Natural killer cell (primary cell): ENCODE measurements at regions of chr2 and their contacts with region 1.

Region 1: DNA sequence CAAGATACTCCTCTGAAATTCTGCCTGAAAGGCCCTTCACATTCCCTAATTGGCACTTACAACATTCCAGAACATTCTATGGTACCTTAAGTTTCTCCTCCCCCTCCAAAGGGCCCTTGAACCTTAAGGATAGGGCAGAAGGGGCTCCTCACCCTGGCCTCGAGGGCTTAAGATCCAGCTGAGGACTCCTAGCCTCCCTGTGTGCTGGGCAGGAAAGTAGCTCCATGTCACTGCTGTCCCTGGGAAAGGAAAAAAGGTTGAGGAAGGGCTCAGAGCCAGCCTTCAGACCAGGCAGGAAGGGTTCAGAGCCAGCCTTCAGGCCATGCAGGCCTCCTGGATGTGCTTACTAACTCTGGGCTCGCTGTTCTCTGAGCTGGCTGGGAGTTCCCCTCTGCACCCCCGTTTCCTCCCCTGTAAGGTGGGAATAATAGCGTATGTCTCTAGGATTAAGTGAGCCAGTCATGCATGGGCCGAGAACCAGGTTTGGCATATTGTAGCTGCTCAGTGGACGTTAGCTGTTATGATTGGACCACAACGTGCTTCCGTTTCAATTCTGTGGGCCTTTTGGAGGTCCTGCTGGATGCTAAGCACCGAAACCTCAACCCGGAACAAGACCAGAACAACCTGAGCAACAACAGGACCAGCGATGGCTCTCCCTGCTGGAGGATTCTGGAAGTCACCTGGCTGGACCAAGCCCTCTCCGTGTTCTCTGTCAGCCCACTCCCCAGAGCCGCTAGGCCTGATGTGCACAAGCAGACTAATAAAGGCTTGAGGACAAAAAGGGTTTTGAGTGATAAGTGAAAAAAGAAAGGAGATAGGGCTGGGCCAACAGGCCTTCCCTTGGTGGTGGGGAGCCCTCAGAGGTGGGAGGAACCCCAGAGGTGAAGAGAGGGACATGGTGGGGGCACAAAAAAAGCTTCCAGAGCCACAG is 1.0 kb upstream of the B3GNT7 start:
- DNase-seq: peak; percentile 41 to 66
- ATAC-seq: peak; percentile 53 to 76 (median 53)
- H3K4me3 ChIP-seq: peak overlapping the region; percentile 56
- H3K4me3 Mint-ChIP-seq: peak overlapping the region; percentile 97
- H3K27ac ChIP-seq: peak overlapping the region; percentile 99
- H3K27ac Mint-ChIP-seq: peak overlapping the region; percentile 99 to 100
- H3K4me1 ChIP-seq: peaks cover 85% of the 10 kb centered on the region
- H3K4me1 Mint-ChIP-seq: peaks cover 59 to 75% of the 10 kb centered on the region in 2 donors
- H3K27me3 ChIP-seq: no peaks in the 10 kb centered on the region
- H3K27me3 Mint-ChIP-seq: no peaks in the 10 kb centered on the region
- CTCF ChIP-seq: peak; percentile 18

Region 2: DNA sequence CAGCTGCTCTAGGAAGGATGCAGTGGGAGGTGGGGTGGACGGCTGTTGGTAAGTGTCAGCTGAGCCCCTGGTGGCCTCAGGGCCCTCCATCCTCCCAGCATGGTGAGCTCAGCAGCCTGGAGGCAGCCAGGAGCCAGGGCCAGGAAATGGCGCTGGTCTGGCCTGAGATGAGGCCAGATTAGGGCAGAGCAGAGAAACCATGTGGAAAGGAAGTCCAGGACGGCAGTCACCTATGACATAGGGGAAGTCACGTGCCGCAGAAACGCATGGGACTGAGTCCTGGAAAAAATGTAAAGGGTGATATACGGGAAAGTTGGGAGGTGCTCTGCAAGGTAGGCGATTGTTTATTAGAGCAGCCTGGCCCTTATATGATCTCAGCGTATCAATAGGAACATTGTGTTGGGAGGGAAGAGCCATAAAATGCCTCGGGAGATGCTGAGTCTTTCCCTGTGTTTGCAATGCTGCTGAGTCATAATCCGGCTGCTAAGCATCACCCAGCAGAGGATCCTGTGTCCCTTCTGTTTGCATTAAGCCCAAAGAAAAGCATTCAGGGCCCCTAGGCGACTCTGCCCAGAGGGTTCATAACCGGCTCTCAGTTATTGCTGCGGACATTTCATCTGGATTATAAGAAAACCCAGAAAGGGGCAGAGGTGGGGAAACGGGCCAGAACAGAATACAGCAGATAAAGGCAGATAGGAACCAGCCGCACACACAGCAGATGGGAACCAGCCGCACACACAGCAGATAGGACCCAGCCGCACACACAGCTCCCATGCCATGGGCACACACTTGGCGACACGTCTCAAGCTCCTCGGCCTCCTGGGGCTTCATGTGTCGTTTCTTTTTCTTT is 29.3 kb before region 1 on chr2:
- intact Hi-C with region 1: loop called (anchors 1 kb)
- DNase-seq: no peak
- ATAC-seq: no peak
- H3K4me3 ChIP-seq: no peak overlapping the region
- H3K4me3 Mint-ChIP-seq: no peak overlapping the region
- H3K27ac ChIP-seq: no peak overlapping the region
- H3K27ac Mint-ChIP-seq: no peak overlapping the region
- H3K4me1 ChIP-seq: peaks cover 35% of the 10 kb centered on the region
- H3K4me1 Mint-ChIP-seq: peaks cover 27 to 33% of the 10 kb centered on the region in 2 donors
- H3K27me3 ChIP-seq: no peaks in the 10 kb centered on the region
- H3K27me3 Mint-ChIP-seq: no peaks in the 10 kb centered on the region
- CTCF ChIP-seq: no peak

Region 3: GRCh38 chr2:231383416-231384108 is 10.9 kb before region 1 on chr2:
- intact Hi-C with region 1: loop called (anchors 1 kb)
- DNase-seq: peak; percentile 28 to 66
- ATAC-seq: peak; percentile 70 to 86 (median 79)
- H3K4me3 ChIP-seq: no peak overlapping the region
- H3K4me3 Mint-ChIP-seq: peak overlapping the region; percentile 69
- H3K27ac ChIP-seq: peak overlapping the region; percentile 90
- H3K27ac Mint-ChIP-seq: peak overlapping the region; percentile 93 to 95
- H3K4me1 ChIP-seq: peaks cover 62% of the 10 kb centered on the region
- H3K4me1 Mint-ChIP-seq: peaks cover 41 to 55% of the 10 kb centered on the region in 2 donors
- H3K27me3 ChIP-seq: no peaks in the 10 kb centered on the region
- H3K27me3 Mint-ChIP-seq: no peaks in the 10 kb centered on the region
- CTCF ChIP-seq: no peak

Region 4: GRCh38 chr2:231425811-231426728 is 31.6 kb after region 1 on chr2:
- intact Hi-C with region 1: loop called (anchors 1 kb)
- DNase-seq: peak; percentile 72 to 85
- ATAC-seq: peak; percentile 83 to 90 (median 86)
- H3K4me3 ChIP-seq: peak overlapping the region; percentile 20
- H3K4me3 Mint-ChIP-seq: peak overlapping the region; percentile 89
- H3K27ac ChIP-seq: peak overlapping the region; percentile 93
- H3K27ac Mint-ChIP-seq: peak overlapping the region; percentile 95 to 100
- H3K4me1 ChIP-seq: peaks cover 39% of the 10 kb centered on the region
- H3K4me1 Mint-ChIP-seq: peaks cover 29 to 35% of the 10 kb centered on the region in 2 donors
- H3K27me3 ChIP-seq: no peaks in the 10 kb centered on the region
- H3K27me3 Mint-ChIP-seq: no peaks in the 10 kb centered on the region
- CTCF ChIP-seq: no peak

Region 5: GRCh38 chr2:231463698-231464575 is 69.5 kb after region 1 on chr2 and contains the start of gene NCL:
- intact Hi-C with region 1: loop called (anchors 5 kb)
- DNase-seq: peak; percentile 73 to 93
- ATAC-seq: peak; percentile 61 to 74 (median 64)
- H3K4me3 ChIP-seq: peak within 1 kb of the TSS; percentile 85
- H3K4me3 Mint-ChIP-seq: peak within 1 kb of the TSS; percentile 92
- H3K27ac ChIP-seq: peak within 1 kb of the TSS; percentile 98
- H3K27ac Mint-ChIP-seq: peak within 1 kb of the TSS; percentile 99 to 100
- H3K4me1 ChIP-seq: peaks cover 26% of the 10 kb centered on the region
- H3K4me1 Mint-ChIP-seq: peaks cover 52 to 58% of the 10 kb centered on the region in 2 donors
- H3K27me3 ChIP-seq: no peaks in the 10 kb centered on the region
- H3K27me3 Mint-ChIP-seq: no peaks in the 10 kb centered on the region
- CTCF ChIP-seq: no peak
- total RNA-seq, gene NCL: 485 to 540 (median 529) TPM

Region 6: GRCh38 chr2:231604685-231605606 is 210.5 kb after region 1 on chr2:
- intact Hi-C with region 1: no loop called
- DNase-seq: peak; percentile 99
- ATAC-seq: peak; percentile 78 to 90 (median 85)
- H3K4me3 ChIP-seq: peak overlapping the region; percentile 29
- H3K4me3 Mint-ChIP-seq: peak overlapping the region; percentile 68
- H3K27ac ChIP-seq: peak overlapping the region; percentile 82
- H3K27ac Mint-ChIP-seq: peak overlapping the region; percentile 79 to 93
- H3K4me1 ChIP-seq: peaks cover 17% of the 10 kb centered on the region
- H3K4me1 Mint-ChIP-seq: peaks cover 6 to 18% of the 10 kb centered on the region in 2 donors
- H3K27me3 ChIP-seq: no peaks in the 10 kb centered on the region
- H3K27me3 Mint-ChIP-seq: peaks cover 0 to 2% of the 10 kb centered on the region in 2 donors
- CTCF ChIP-seq: no peak

Region 7: DNA sequence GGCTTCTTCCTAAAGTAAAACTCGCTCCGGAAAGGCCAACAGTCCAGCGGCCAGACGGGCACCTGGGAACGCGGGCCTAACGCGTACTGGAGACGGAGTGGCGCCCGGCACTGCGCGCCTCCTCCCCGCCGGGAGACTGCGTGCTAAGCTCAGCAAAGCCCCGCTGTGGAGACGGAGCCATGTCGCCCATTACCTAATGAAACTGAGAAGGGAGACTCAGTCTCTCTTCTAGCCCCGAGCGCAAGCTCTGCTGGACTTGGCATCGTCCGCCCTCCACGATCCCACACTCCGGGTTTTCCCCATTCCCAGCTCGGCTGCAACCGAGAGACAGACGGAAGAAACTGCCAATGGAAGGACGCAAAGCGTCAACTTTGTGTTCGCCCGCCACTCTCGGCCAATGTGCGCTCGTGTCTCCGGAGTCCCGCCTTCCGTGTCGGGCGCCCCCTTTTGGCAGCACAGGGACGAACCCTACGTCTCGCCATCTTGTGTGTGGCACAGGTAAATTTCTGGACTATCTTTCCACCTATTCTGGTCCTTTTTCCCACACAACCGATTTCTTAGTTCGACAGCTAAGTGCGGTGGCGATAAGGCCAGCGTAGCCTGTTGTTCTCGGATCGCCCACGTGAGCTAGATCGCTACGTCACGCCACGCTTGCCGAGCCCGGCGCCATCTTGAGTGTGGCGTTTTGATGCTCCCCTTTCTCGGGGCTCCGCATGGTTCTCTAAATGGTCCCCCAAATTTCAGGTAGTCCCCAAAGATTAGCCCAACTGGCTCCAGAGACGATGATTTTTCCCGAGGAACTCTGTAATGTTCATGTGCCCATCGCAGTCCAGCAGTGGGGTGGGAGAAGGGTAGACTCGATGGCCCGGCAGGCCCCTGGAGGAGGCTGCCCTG is 312.5 kb after region 1 on chr2:
- intact Hi-C with region 1: loop called (anchors 5 kb)
- DNase-seq: peak; percentile 97 to 98
- ATAC-seq: peak; percentile 37 to 64 (median 50)
- H3K4me3 ChIP-seq: peak overlapping the region; percentile 85
- H3K4me3 Mint-ChIP-seq: peak overlapping the region; percentile 98
- H3K27ac ChIP-seq: peak overlapping the region; percentile 95
- H3K27ac Mint-ChIP-seq: peak overlapping the region; percentile 97 to 100
- H3K4me1 ChIP-seq: peaks cover 34% of the 10 kb centered on the region
- H3K4me1 Mint-ChIP-seq: peaks cover 24 to 37% of the 10 kb centered on the region in 2 donors
- H3K27me3 ChIP-seq: no peaks in the 10 kb centered on the region
- H3K27me3 Mint-ChIP-seq: peaks cover 0 to 6% of the 10 kb centered on the region in 2 donors
- CTCF ChIP-seq: peak; percentile 92